ENCODE measurements at regions of chr18 and their contacts with region 1.

Region 1: GRCh38 chr18:62080172-62080905 is 106.5 kb downstream of the PIGN start:
- DNase-seq: no peak
- ATAC-seq: no peak
- H3K4me3 ChIP-seq: no peak overlapping the region
- H3K27ac ChIP-seq: no peak overlapping the region
- H3K4me1 ChIP-seq: no peaks in the 10 kb centered on the region
- H3K27me3 ChIP-seq: no peaks in the 10 kb centered on the region
- CTCF ChIP-seq: no peak
- POLR2A ChIP-seq: no peak
- RAD21 ChIP-seq: no peak

Region 2: DNA sequence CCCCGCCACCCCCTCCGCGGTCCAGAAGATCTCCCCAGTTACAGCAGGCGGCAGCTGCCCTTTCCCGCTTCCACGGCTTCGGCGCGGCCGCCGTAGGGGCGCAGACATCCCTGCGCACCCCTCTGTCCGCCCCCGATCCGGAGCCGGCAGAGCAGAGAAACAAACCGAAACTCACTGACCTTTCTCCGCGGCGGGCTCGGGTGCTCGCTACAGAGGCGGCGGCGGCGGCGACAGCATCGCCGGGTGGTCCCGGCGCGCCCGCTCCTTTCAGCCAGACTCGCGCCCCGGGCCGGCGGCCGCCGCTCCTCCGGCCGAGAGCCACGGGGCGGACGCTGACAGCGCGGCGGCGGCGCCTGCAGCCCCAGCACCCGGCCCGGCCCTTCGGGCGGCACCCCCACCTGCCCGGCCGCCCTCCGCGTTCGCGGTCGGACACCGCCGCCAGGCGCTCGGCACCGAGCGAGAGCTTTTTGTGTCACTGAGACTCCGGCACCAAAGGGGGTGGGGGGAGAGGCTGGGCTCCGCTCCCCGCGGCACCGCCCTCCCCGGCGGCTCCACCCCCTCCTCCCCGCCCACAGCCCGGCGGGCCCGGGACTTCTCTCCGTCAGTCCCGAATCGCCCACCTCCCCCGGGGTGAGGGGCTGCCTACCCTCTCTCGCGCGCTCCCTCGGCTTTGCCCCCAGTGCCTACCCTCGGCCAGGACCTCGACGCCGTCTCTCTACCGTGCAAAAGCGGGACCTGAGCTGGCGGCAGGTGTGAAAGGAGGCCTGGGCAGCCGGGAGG is 186.2 kb before region 1 on chr18:
- CTCF ChIA-PET with region 1: no interaction called
- POLR2A ChIA-PET with region 1: no interaction called
- dilution Hi-C with region 1: no loop called
- in situ Hi-C with region 1: no loop called
- intact Hi-C with region 1: no loop called
- DNase-seq: peak; percentile 64
- ATAC-seq: peak; percentile 93
- H3K4me3 ChIP-seq: peak overlapping the region; percentile 95
- H3K27ac ChIP-seq: peak overlapping the region; percentile 74
- H3K4me1 ChIP-seq: peaks cover 7% of the 10 kb centered on the region
- H3K27me3 ChIP-seq: no peaks in the 10 kb centered on the region
- CTCF ChIP-seq: peak; percentile 54
- POLR2A ChIP-seq: peak; percentile 76
- RAD21 ChIP-seq: peak; percentile 60

Region 3: GRCh38 chr18:62118328-62118727 is 38.0 kb after region 1 on chr18:
- CTCF ChIA-PET with region 1: interaction called, 10 read pairs
- POLR2A ChIA-PET with region 1: no interaction called
- dilution Hi-C with region 1: no loop called
- in situ Hi-C with region 1: no loop called
- intact Hi-C with region 1: no loop called
- DNase-seq: peak; percentile 81
- ATAC-seq: peak; percentile 35
- H3K4me3 ChIP-seq: no peak overlapping the region
- H3K27ac ChIP-seq: no peak overlapping the region
- H3K4me1 ChIP-seq: no peaks in the 10 kb centered on the region
- H3K27me3 ChIP-seq: no peaks in the 10 kb centered on the region
- CTCF ChIP-seq: no peak
- POLR2A ChIP-seq: no peak
- RAD21 ChIP-seq: no peak

Region 4: GRCh38 chr18:62131301-62131909 is 51.1 kb after region 1 on chr18:
- CTCF ChIA-PET with region 1: no interaction called
- POLR2A ChIA-PET with region 1: no interaction called
- dilution Hi-C with region 1: no loop called
- in situ Hi-C with region 1: no loop called
- intact Hi-C with region 1: no loop called
- DNase-seq: peak; percentile 76
- ATAC-seq: peak; percentile 92
- H3K4me3 ChIP-seq: no peak overlapping the region
- H3K27ac ChIP-seq: no peak overlapping the region
- H3K4me1 ChIP-seq: peaks cover 2% of the 10 kb centered on the region
- H3K27me3 ChIP-seq: no peaks in the 10 kb centered on the region
- CTCF ChIP-seq: peak; percentile 98
- POLR2A ChIP-seq: peak; percentile 64; the same call in 1 of the 2 replicates
- RAD21 ChIP-seq: peak; percentile 99

Region 5: DNA sequence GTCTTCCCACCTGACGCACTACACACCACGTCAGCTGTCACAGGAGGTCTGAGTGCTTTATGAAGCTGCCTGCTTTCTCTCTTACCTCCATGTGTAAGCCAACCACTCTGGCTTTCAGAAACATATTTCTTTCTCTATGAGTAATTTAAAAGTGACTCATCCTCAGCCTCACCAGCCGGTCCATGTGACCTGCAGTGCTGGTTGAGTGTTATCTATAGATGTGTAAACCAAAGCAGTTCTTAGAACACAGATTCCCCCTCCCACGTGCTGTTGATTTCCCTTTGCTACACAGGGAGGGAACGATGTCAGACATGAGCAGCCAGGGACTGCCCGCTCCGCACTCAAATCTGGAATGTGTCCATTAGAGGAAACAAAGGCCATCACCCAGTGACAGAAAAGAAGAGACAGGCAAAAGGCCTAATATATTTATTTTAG is 1081.4 kb after region 1 on chr18:
- CTCF ChIA-PET with region 1: no interaction called
- POLR2A ChIA-PET with region 1: no interaction called
- dilution Hi-C with region 1: no loop called
- in situ Hi-C with region 1: no loop called
- intact Hi-C with region 1: no loop called
- DNase-seq: peak; percentile 93
- ATAC-seq: peak; percentile 97
- H3K4me3 ChIP-seq: no peak overlapping the region
- H3K27ac ChIP-seq: no peak overlapping the region
- H3K4me1 ChIP-seq: peaks cover 6% of the 10 kb centered on the region; the same call in 1 of the 2 replicates
- H3K27me3 ChIP-seq: no peaks in the 10 kb centered on the region
- CTCF ChIP-seq: no peak
- POLR2A ChIP-seq: no peak
- RAD21 ChIP-seq: no peak

Region 6: GRCh38 chr18:63859781-63860475 is 1779.6 kb after region 1 on chr18:
- CTCF ChIA-PET with region 1: no interaction called
- POLR2A ChIA-PET with region 1: no interaction called
- dilution Hi-C with region 1: no loop called
- in situ Hi-C with region 1: no loop called
- intact Hi-C with region 1: no loop called
- DNase-seq: no peak
- ATAC-seq: no peak
- H3K4me3 ChIP-seq: no peak overlapping the region
- H3K27ac ChIP-seq: no peak overlapping the region
- H3K4me1 ChIP-seq: no peaks in the 10 kb centered on the region
- H3K27me3 ChIP-seq: no peaks in the 10 kb centered on the region
- CTCF ChIP-seq: no peak
- POLR2A ChIP-seq: no peak
- RAD21 ChIP-seq: no peak

Measured in IMR-90 (cell line).